ENCODE measurements at regions of chr1 and their contacts with region 1.

Region 1: DNA sequence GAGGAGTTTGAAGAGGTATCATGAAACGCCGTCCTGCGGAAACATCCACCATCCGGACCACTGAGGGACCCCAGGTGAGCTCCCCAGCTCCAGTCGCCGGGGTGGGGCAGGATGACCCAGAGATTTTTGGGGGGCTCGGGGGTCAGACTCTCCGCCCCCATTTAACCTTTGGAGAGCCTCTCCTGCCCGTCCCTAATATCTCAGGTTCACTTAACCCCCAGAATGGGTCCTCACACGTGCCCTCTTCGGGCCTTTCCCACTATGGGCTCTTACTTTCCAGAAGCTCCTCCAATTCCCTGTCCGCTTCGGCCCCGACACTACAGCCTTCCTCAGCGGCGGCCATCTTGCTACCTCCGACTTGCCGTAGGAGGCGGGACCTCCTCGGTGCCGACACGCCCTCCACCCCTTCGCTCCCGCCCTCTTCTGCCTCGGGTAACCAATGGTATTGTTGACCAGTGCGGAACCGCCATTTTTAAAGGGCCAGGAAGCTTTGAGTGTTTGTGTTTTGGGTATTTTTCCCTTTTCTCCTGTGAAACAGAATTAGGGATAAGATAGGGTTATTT is at the start of gene PEX19:
- DNase-seq: peak; percentile 87
- H3K4me3 ChIP-seq: peak within 1 kb of the TSS; percentile 79 to 90 (median 84)
- H3K27ac ChIP-seq: peak within 1 kb of the TSS; percentile 74
- H3K4me1 ChIP-seq: peaks cover 16% of the 10 kb centered on the region
- H3K27me3 ChIP-seq: no peaks in the 10 kb centered on the region
- CTCF ChIP-seq: no peak
- total RNA-seq, gene PEX19: 50.3 to 51.3 TPM

Region 2: DNA sequence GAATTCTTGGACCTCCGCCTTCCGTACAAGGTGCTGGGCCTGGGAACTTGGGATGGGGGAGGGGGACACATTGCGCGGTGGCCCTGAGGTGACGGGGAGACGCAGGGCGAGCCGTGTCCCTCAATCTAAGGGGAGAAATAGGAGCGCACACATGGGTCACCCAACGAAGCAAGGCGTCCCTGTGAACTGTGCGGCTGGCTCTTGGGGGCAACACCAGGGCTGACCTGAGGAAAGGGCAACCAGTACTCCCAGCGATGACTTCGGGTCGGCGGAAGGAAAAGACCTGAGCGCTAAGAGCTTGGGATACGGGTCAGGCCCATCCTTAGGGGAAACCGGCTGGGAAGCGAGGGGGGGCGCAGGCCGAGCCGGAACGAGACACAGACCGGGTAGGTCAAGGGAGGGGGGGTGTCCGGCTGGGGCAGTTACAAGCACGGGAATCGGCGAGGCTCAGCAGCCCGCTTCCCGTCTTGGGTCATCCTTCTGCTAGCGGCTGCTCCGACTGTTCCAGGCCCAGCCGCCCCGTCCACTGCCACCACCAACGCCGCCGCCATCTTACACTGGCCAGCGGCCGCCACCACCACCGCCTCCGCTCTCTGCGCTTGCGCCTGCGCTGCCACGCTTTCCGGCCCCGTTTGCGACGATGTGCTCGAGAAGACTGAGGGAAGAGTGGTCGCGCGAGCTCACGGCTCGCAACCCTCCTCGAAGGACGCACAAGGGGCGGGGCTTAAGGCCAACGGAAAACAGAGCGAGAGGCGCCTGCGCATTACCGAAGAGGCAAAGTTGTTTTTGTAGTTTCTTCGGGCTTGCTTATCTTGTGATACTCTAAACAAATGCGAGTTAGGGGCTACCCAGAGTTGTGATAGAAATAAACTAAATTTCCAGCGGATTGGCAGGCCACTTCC is 22.7 kb before region 1 on chr1 and contains the start of gene DCAF8:
- CTCF ChIA-PET with region 1: interaction called, 7 read pairs
- dilution Hi-C with region 1: loop called (anchors 5 kb)
- in situ Hi-C with region 1: no loop called
- intact Hi-C with region 1: loop called (anchors 1 kb)
- DNase-seq: peak; percentile 96
- H3K4me3 ChIP-seq: peak within 1 kb of the TSS; percentile 81 to 97 (median 82)
- H3K27ac ChIP-seq: peak within 1 kb of the TSS; percentile 93
- H3K4me1 ChIP-seq: peaks cover 21% of the 10 kb centered on the region
- H3K27me3 ChIP-seq: no peaks in the 10 kb centered on the region
- CTCF ChIP-seq: no peak
- total RNA-seq, gene DCAF8: 72.0 to 93.8 TPM